ENCODE measurements at regions of chr12 and their contacts with region 1.

Region 1: GRCh38 chr12:49296034-49296835 is 1.3 kb downstream of the PRPH start:
- DNase-seq: peak; percentile 77
- ATAC-seq: peak; percentile 71
- H3K4me3 Mint-ChIP-seq: peak overlapping the region; percentile 67
- H3K27ac Mint-ChIP-seq: no peak overlapping the region
- H3K4me1 Mint-ChIP-seq: peaks cover 20% of the 10 kb centered on the region
- H3K27me3 Mint-ChIP-seq: peaks cover 63% of the 10 kb centered on the region

Region 2: DNA sequence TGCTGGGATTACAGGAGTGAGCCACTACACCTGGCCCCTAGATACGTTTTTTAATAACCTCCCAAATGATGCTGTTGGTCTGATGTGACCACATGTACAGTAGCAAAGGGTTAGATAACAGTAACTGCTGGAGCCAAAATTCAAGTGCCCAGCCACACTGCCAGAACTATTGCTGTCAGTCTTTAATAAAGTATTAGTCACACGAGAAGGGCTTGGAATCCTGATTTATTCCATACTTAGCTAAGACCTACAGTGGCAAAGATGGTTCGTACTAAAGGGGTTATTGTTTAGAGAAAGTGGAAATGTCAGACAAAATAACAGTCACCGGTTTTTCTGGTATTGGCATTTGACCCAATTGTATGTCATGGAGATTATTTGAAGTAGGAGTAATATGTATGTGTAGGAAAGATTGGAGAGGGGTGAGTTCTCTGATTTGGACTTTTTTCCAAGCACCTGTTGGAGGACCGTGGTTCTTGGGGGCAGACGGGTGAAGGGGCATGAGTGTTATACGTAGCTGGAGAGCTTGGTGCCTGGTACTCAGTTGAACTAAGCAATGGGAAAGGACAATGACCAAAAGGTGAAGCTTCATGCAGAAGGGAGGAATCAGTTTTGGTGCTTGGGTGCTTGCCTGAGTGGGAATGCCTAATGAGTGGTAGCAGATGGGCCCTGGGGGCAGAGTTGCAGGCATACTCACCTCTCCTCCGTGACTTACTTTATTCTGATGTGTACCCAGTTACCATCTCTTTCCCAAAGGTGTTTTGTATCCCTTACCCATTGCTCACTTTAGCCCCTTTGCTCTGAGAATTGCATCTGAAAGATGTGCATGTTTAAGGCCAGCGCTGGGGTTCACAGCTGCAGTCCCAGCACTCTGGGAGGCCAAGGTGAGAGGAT is 21.6 kb before region 1 on chr12:
- CTCF ChIA-PET with region 1: interaction called, 14 read pairs
- DNase-seq: no peak
- ATAC-seq: no peak
- H3K4me3 Mint-ChIP-seq: no peak overlapping the region
- H3K27ac Mint-ChIP-seq: no peak overlapping the region
- H3K4me1 Mint-ChIP-seq: peaks cover 9% of the 10 kb centered on the region
- H3K27me3 Mint-ChIP-seq: peaks cover under 1% of the 10 kb centered on the region

Region 3: GRCh38 chr12:49309391-49309790 is 13.2 kb after region 1 on chr12:
- CTCF ChIA-PET with region 1: interaction called, 20 read pairs
- DNase-seq: no peak
- ATAC-seq: no peak
- H3K4me3 Mint-ChIP-seq: no peak overlapping the region
- H3K27ac Mint-ChIP-seq: no peak overlapping the region
- H3K4me1 Mint-ChIP-seq: peaks cover 5% of the 10 kb centered on the region
- H3K27me3 Mint-ChIP-seq: peaks cover 55% of the 10 kb centered on the region

Region 4: DNA sequence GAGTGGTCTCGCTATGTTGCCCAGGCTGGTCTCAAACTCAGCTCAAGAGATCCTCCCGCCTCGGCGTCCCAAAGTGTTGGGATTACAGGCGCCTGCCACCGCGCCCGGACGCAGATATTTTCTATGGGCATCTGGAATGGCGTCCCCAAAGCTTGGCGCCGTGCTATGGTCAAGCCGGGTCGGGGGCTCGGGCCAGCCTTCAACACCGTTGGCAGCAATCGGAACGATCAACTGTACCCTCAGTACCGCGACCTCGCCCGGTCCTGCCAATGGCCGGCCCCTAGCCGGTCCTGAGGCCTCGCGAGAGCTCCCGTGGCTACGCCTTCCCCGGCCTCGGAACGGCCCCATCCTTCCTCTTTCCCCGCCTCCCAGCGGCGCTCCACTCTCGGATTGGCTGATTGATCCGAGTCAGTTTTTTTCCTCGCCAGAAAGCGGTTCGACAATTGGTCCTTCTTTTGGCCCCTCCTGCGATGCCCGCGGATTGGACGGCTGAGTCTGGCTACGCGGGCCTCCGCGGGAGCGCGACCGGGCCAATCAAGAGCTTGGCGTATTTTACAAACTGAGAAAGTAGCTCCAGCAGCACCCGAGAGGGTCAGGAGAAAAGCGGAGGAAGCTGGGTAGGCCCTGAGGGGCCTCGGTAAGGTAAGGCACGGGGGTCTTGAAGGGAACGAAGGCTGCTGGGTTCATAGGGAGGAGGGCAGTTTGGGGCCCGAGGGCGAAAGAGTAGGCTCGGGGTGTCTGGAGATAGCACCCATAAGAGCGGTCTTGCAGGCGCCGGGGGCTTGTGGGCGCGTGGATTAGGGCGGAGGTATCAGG is 26.7 kb after region 1 on chr12 and contains the start of gene TROAP:
- CTCF ChIA-PET with region 1: interaction called, 35 read pairs
- DNase-seq: peak; percentile 99
- ATAC-seq: peak; percentile 98
- H3K4me3 Mint-ChIP-seq: peak within 1 kb of the TSS; percentile 97
- H3K27ac Mint-ChIP-seq: peak within 1 kb of the TSS; percentile 98
- H3K4me1 Mint-ChIP-seq: peaks cover 28% of the 10 kb centered on the region
- H3K27me3 Mint-ChIP-seq: no peaks in the 10 kb centered on the region
- total RNA-seq, gene TROAP: 89.5 to 107 TPM

Region 5: DNA sequence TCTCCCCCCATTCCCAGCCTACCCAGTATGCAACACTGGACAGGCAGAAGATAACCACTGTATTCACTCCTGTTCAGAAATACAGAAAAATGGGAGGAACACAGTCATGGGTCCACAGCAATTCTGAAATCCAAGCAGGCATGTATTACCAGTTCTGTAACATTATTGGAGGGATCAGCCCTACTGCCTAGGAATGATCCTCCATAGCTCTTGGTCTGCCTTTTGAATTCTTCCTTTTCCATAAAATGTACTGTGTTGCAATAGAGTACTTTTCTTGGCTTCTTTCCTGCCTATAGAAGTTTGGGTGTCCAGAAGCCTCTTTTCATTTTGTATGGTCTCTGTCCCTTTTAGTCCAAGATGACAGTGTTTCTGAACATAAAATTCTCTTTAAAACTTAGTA is 117.6 kb after region 1 on chr12:
- CTCF ChIA-PET with region 1: no interaction called
- DNase-seq: no peak
- ATAC-seq: no peak
- H3K4me3 Mint-ChIP-seq: no peak overlapping the region
- H3K27ac Mint-ChIP-seq: no peak overlapping the region
- H3K4me1 Mint-ChIP-seq: no peaks in the 10 kb centered on the region
- H3K27me3 Mint-ChIP-seq: no peaks in the 10 kb centered on the region